ENCODE measurements at regions of chr17 and their contacts with region 1.

Region 1: DNA sequence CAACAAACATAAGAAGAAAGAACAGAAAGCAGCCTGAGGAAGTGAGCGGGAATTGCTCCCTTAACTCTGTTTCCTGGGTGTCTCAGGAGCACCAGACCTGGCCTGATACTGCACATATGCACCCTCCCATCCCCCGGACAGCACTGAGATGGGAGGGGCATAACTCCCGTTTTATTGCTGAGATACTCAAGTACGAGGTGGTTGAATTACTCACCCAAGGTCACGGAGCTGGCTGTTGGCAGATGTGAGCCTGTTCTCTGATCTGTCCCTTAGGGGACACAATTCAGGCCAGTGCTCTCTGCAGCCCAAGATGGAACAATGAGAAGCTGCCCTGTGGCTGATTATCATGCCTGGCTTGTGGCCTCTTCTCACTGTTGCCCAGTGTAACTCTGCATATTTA is 9.1 kb upstream of the MED9 start:
- DNase-seq: no peak
- H3K4me3 ChIP-seq: no peak overlapping the region
- H3K27ac ChIP-seq: no peak overlapping the region
- H3K4me1 ChIP-seq: no peaks in the 10 kb centered on the region
- H3K27me3 ChIP-seq: peaks cover 37 to 47% of the 10 kb centered on the region in 2 experiments
- CTCF ChIP-seq: no peak
- POLR2A ChIP-seq: no peak

Region 2: GRCh38 chr17:17376362-17376761 is 91.4 kb before region 1 on chr17:
- CTCF ChIA-PET with region 1: no interaction called
- POLR2A ChIA-PET with region 1: no interaction called
- dilution Hi-C with region 1: loop called (anchors 10 kb)
- intact Hi-C with region 1: no loop called
- DNase-seq: no peak
- H3K4me3 ChIP-seq: no peak overlapping the region
- H3K27ac ChIP-seq: no peak overlapping the region
- H3K4me1 ChIP-seq: no peaks in the 10 kb centered on the region
- H3K27me3 ChIP-seq: peaks cover 21 to 25% of the 10 kb centered on the region in 2 experiments
- CTCF ChIP-seq: no peak
- POLR2A ChIP-seq: no peak

Region 3: GRCh38 chr17:17526369-17526768 is 58.6 kb after region 1 on chr17:
- CTCF ChIA-PET with region 1: no interaction called
- POLR2A ChIA-PET with region 1: no interaction called
- dilution Hi-C with region 1: no loop called
- intact Hi-C with region 1: loop called (anchors 5 kb)
- DNase-seq: no peak
- H3K4me3 ChIP-seq: no peak overlapping the region
- H3K27ac ChIP-seq: no peak overlapping the region
- H3K4me1 ChIP-seq: no peaks in the 10 kb centered on the region
- H3K27me3 ChIP-seq: no peaks in the 10 kb centered on the region
- CTCF ChIP-seq: no peak
- POLR2A ChIP-seq: no peak